ENCODE measurements at regions of chr7 and their contacts with region 1.

Region 1: GRCh38 chr7:6256109-6256483 is 16.3 kb downstream of the CYTH3 start:
- DNase-seq: no peak
- H3K4me3 ChIP-seq: no peak overlapping the region
- H3K27ac ChIP-seq: no peak overlapping the region
- H3K4me1 ChIP-seq: 0 out of 2 replicates have a peak, but pooled peaks cover 6% of the 10 kb centered on the region
- H3K27me3 ChIP-seq: no peaks in the 10 kb centered on the region
- CTCF ChIP-seq: no peak

Region 2: DNA sequence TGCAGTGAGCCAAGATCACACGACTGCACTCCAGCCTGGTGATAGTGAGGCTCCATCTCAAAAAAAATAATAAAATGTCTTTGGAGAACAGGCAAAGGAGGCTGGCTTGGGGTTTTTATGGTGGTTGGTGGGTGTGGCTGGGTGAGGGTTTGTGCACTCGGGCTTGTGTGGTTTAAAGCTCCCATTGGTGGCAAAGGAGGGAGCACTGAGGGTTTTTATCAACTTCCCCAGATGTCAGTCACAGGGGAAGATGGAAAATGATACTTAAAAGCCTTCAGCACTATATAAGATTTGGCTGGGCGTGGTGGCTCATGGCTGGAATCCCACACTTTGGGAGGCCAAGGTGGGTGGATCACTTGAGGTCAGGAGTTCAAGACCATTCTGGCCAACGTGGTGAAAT is 458.4 kb before region 1 on chr7:
- CTCF ChIA-PET with region 1: no interaction called
- POLR2A ChIA-PET with region 1: interaction called, 10 read pairs
- intact Hi-C with region 1: no loop called
- DNase-seq: no peak
- H3K4me3 ChIP-seq: no peak overlapping the region
- H3K27ac ChIP-seq: no peak overlapping the region
- H3K4me1 ChIP-seq: no peaks in the 10 kb centered on the region
- H3K27me3 ChIP-seq: no peaks in the 10 kb centered on the region
- CTCF ChIP-seq: no peak

Region 3: GRCh38 chr7:6057316-6058129 is 198.6 kb before region 1 on chr7:
- CTCF ChIA-PET with region 1: no interaction called
- POLR2A ChIA-PET with region 1: no interaction called
- intact Hi-C with region 1: no loop called
- DNase-seq: no peak
- H3K4me3 ChIP-seq: peak overlapping the region; percentile 87
- H3K27ac ChIP-seq: peak overlapping the region; percentile 88; the same call in 1 of the 2 replicates
- H3K4me1 ChIP-seq: peaks cover 16% of the 10 kb centered on the region
- H3K27me3 ChIP-seq: no peaks in the 10 kb centered on the region
- CTCF ChIP-seq: no peak

Region 4: DNA sequence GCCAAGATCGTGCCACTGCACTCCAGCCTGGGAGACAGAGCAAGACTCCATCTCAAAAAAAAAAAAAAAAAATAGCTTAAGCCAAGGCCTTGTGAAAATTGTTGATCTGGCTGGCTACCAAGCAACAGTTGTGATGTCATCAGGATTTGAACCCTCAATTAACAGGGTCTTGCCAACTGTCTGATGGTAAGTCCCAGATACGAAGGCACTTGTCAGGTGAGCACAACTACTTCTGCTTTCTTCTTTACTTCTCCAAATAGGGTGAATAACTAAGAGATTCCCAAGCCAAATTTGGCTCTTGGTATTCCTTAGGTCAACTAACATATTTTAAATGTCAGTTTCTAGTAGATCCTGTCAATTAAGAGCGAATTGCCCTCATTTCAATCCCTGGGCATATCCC is 177.5 kb before region 1 on chr7:
- CTCF ChIA-PET with region 1: no interaction called
- POLR2A ChIA-PET with region 1: interaction called, 27 read pairs
- intact Hi-C with region 1: no loop called
- DNase-seq: no peak
- H3K4me3 ChIP-seq: no peak overlapping the region
- H3K27ac ChIP-seq: peak overlapping the region; percentile 94
- H3K4me1 ChIP-seq: peaks cover 20% of the 10 kb centered on the region
- H3K27me3 ChIP-seq: no peaks in the 10 kb centered on the region
- CTCF ChIP-seq: no peak

Region 5: DNA sequence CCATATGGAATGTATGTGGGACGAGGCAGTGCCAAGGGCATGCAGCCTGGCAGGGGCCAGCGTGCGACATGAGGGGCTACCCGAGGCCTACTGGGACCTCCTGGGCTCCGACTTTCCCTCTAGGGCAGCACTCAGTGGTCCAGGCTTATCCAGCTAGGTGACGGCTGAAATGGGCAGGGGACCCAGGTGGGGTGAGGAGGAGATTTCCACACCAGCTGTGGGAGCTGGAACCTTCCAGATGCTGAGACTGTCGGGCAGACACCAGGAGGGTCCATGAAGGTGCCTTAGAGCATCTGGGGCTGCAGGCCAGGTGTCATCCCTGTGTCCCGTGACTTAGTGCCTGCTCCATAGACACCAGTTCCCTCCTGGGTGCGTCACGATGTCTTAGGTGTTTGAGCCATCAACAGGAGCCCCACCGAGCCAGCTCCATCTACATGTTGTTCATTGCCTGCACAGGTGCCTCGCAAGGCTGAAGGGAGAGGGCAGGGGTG is 394.5 kb after region 1 on chr7:
- CTCF ChIA-PET with region 1: no interaction called
- POLR2A ChIA-PET with region 1: no interaction called
- intact Hi-C with region 1: no loop called
- DNase-seq: no peak
- H3K4me3 ChIP-seq: no peak overlapping the region
- H3K27ac ChIP-seq: no peak overlapping the region
- H3K4me1 ChIP-seq: no peaks in the 10 kb centered on the region
- H3K27me3 ChIP-seq: no peaks in the 10 kb centered on the region
- CTCF ChIP-seq: no peak